ENCODE measurements at regions of chr12 and their contacts with region 1.

Region 1: DNA sequence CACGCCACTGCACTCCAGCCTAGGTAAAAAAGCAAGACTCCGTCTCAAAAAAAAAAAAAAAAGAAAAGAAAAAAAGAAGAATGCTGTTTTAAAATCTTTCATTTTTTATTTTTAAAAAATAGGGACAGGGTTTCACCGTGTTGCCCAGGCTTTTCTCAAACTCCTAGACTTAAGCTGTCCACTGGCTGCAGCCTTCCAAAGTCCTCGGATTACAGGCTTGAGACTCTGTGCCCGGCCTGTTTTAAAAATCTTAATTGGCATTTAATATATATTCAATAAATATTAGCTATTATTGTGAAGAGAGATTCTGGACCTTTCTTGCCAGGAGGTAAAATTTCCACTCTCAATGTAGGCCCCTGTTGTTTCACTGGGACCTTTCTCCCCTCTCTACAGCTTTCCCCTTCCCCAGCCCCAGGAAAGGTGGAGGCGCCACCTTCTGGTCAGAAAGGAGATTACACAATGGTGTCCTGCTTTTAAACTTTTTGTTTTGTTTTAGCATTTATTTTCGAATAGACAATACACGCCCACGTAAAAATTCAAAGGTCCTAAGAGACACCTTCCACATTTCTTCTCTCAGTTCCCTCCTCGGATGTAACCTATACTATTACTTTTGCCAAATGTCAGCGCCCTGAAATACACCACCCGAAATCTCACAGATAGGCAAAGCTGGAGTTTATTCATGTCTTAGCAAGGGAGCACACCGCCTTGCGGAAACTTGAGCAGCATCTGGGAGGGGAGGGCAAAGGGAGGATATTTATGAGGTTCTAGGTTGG is 23.8 kb upstream of the PHC1 start:
- DNase-seq: no peak
- H3K4me3 ChIP-seq: peak overlapping the region; percentile 19 to 51 (median 44)
- H3K27ac ChIP-seq: peak overlapping the region in 3 of 4 donors; percentile 40 to 59 (median 53)
- H3K4me1 ChIP-seq: no peaks in the 10 kb centered on the region
- H3K27me3 ChIP-seq: no peaks in the 10 kb centered on the region
- CTCF ChIP-seq: peak; percentile 63 to 86 (median 76)
- EP300 ChIP-seq: no peak
- POLR2A ChIP-seq: no peak

Region 2: DNA sequence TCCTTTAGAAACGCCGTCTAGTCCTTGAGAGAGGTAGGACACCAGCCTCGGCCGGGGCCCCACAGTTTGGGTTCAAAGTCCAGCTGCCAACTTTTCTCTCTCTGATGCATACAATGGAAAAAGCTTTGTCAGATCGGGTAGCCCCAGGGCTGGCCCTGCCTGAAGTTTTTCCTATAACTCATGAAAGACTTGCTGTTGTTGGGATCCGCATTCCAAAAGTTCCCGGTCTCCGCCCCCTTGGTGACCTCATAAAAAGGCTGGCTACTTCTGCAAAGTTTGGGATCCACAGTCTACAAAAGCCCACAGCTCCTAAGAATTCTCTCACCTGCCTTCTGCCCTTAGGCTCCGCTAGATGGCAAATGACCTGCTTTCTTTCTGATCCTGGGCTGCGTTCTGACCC is 470.0 kb before region 1 on chr12:
- intact Hi-C with region 1: no loop called
- DNase-seq: no peak
- H3K4me3 ChIP-seq: no peak overlapping the region
- H3K27ac ChIP-seq: no peak overlapping the region
- H3K4me1 ChIP-seq: no peaks in the 10 kb centered on the region
- H3K27me3 ChIP-seq: no peaks in the 10 kb centered on the region
- CTCF ChIP-seq: no peak
- EP300 ChIP-seq: no peak
- POLR2A ChIP-seq: no peak

Region 3: GRCh38 chr12:8544295-8544694 is 346.2 kb before region 1 on chr12:
- intact Hi-C with region 1: loop called (anchors 10 kb)
- DNase-seq: no peak
- H3K4me3 ChIP-seq: no peak overlapping the region
- H3K27ac ChIP-seq: no peak overlapping the region
- H3K4me1 ChIP-seq: no peaks in the 10 kb centered on the region
- H3K27me3 ChIP-seq: peaks cover 0 to 6% (median 0%) of the 10 kb centered on the region in 3 donors
- CTCF ChIP-seq: peak; percentile 39 to 86 (median 66)
- EP300 ChIP-seq: no peak
- POLR2A ChIP-seq: no peak

Region 4: DNA sequence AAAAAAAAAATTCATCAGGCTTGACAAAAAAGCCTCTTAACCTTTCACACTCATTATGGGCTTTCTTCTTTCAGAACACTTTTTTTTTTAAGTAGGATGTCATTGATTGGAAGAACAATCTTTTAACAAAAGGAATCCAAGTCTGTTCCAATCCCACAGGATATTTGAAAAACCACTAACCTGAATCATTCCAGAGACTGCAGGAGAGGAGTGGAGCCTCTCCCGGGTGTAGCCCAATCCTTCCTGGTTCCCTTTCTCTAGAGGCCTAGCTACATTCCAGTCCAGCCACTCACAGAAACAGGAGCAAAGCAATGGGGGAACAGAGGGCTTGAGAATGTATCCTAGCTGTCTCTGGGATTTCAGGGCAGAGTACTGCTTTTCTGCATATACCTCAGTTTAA is 232.2 kb before region 1 on chr12:
- intact Hi-C with region 1: loop called (anchors 5 kb)
- DNase-seq: no peak
- H3K4me3 ChIP-seq: no peak overlapping the region
- H3K27ac ChIP-seq: peak overlapping the region in 1 of 4 donors; percentile 47
- H3K4me1 ChIP-seq: peaks cover 0 to 2% (median 0%) of the 10 kb centered on the region in 4 donors
- H3K27me3 ChIP-seq: no peaks in the 10 kb centered on the region
- CTCF ChIP-seq: no peak
- EP300 ChIP-seq: no peak
- POLR2A ChIP-seq: no peak

Region 5: DNA sequence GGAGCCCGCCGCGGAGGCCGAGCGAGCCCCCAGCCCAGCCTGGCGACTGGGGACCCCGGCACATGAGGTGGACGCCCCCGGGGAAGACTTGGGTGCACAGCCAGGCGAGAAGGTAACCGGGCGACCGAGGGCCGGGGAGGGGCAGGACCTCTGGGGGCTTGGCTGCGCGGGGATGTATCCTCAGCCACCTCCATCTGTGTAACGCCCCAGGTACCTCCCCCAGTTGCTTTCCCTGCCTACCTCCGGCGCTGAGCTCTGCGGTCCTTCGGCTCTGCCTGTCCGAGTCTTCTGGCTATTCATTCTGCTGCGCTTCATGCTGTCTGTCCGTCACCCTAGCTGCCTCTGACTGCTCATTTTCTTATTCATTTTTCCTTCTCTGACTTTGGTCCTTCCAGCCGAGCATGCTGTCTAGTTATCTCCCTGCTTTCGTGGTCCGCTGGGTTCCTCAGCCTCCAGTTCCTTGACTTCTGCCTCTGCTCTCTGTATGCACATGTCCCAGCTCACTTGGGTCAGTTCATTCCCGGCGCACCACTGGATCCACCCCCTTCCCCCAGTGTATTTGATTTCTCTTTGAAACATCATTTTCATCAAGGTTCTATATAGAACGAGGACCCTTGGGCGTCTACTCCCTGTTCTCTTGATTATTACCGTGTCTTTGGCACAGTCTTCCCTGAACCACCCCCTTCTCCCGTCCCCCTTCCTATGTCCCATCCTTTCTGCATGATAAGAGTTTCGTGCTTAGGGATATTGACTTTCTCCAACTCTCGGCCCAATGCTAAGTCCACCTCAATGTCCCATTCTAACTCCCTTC is 24.4 kb after region 1 on chr12:
- intact Hi-C with region 1: no loop called
- DNase-seq: peak; percentile 77
- H3K4me3 ChIP-seq: peak overlapping the region; percentile 52 to 72 (median 64)
- H3K27ac ChIP-seq: peak overlapping the region; percentile 83 to 95 (median 92)
- H3K4me1 ChIP-seq: peaks cover 0 to 29% (median 23%) of the 10 kb centered on the region in 4 donors
- H3K27me3 ChIP-seq: no peaks in the 10 kb centered on the region
- CTCF ChIP-seq: no peak
- EP300 ChIP-seq: no peak
- POLR2A ChIP-seq: no peak

Measured in sigmoid colon (tissue), 7 donors.